ENCODE measurements at regions of chr1 and their contacts with region 1.

Region 1: GRCh38 chr1:40153073-40153770 is 8.0 kb upstream of the RLF start:
- DNase-seq: peak in 2 of 5 donors; percentile 43 to 55
- H3K4me3 ChIP-seq: no peak overlapping the region
- H3K4me3 Mint-ChIP-seq: peak overlapping the region in 1 of 7 donors; percentile 50
- H3K27ac ChIP-seq: no peak overlapping the region
- H3K27ac Mint-ChIP-seq: peak overlapping the region in 7 of 8 donors; percentile 7 to 78 (median 62)
- H3K4me1 ChIP-seq: no peaks in the 10 kb centered on the region
- H3K4me1 Mint-ChIP-seq: peaks cover 5 to 10% (median 6%) of the 10 kb centered on the region in 3 donors
- H3K27me3 ChIP-seq: no peaks in the 10 kb centered on the region
- H3K27me3 Mint-ChIP-seq: peaks cover 3 to 5% of the 10 kb centered on the region in 2 donors

Region 2: GRCh38 chr1:40132383-40133311 is 20.6 kb before region 1 on chr1:
- CTCF ChIA-PET with region 1: no interaction called
- POLR2A ChIA-PET with region 1: no interaction called
- DNase-seq: no peak
- H3K4me3 ChIP-seq: no peak overlapping the region
- H3K4me3 Mint-ChIP-seq: no peak overlapping the region
- H3K27ac ChIP-seq: no peak overlapping the region
- H3K27ac Mint-ChIP-seq: no peak overlapping the region
- H3K4me1 ChIP-seq: no peaks in the 10 kb centered on the region
- H3K4me1 Mint-ChIP-seq: peaks cover 0 to 1% (median 0%) of the 10 kb centered on the region in 3 donors
- H3K27me3 ChIP-seq: no peaks in the 10 kb centered on the region
- H3K27me3 Mint-ChIP-seq: peaks cover 18 to 33% of the 10 kb centered on the region in 2 donors

Region 3: DNA sequence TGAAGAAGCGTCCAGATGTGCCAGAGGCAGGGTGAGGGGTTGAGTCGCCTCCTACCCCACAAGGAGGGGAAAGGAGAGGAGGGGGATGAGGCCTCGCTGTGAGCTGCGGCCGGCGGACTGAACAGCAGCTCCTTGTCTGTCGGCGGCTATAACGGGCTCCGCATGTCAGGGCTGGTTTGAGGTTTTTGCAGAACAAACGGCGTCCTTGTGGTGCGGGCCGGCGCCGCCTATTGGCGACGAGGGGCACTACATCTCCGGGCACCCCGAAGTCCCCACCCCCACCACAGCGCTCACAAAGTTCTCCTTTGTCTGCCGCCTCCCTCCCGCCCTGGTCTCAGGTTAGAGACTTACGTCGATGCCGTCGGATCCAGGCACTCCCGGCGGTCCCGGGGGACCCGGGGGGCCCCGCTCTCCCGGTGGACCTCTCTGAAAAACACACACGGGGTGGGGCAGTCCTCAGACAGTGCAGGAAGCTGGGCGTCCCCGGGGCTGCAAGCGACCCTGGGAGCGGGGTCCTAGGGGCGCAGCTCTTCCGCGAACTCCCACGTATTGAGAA is 162.1 kb after region 1 on chr1:
- CTCF ChIA-PET with region 1: interaction called, 47 read pairs
- POLR2A ChIA-PET with region 1: interaction called, 3 read pairs
- DNase-seq: peak; percentile 72 to 88 (median 81)
- H3K4me3 ChIP-seq: peak overlapping the region; percentile 80
- H3K4me3 Mint-ChIP-seq: peak overlapping the region; percentile 84 to 93 (median 90)
- H3K27ac ChIP-seq: no peak overlapping the region
- H3K27ac Mint-ChIP-seq: peak overlapping the region in 5 of 8 donors; percentile 15 to 89 (median 84)
- H3K4me1 ChIP-seq: peaks cover 19% of the 10 kb centered on the region
- H3K4me1 Mint-ChIP-seq: peaks cover 13 to 41% (median 23%) of the 10 kb centered on the region in 3 donors
- H3K27me3 ChIP-seq: peaks cover 5% of the 10 kb centered on the region
- H3K27me3 Mint-ChIP-seq: peaks cover 8 to 18% of the 10 kb centered on the region in 2 donors

Measured in CD8-positive, alpha-beta memory T cell (primary cell).